ENCODE measurements at regions of chr9 and their contacts with region 1.

Region 1: GRCh38 chr9:106035806-106036205 is 341.5 kb downstream of the TMEM38B start:
- DNase-seq: no peak
- ATAC-seq: no peak
- H3K4me3 ChIP-seq: no peak overlapping the region
- H3K27ac ChIP-seq: no peak overlapping the region
- H3K4me1 ChIP-seq: peaks cover 0 to 16% (median 6%) of the 10 kb centered on the region in 9 donors
- H3K27me3 ChIP-seq: no peaks in the 10 kb centered on the region
- CTCF ChIP-seq: no peak

Region 2: GRCh38 chr9:105973951-105974351 is 61.9 kb before region 1 on chr9:
- intact Hi-C with region 1: no loop called
- DNase-seq: no peak
- ATAC-seq: peak in 4 of 8 donors; percentile 30 to 73 (median 64)
- H3K4me3 ChIP-seq: no peak overlapping the region
- H3K27ac ChIP-seq: no peak overlapping the region
- H3K4me1 ChIP-seq: peaks cover 0 to 21% (median 8%) of the 10 kb centered on the region in 9 donors
- H3K27me3 ChIP-seq: no peaks in the 10 kb centered on the region
- CTCF ChIP-seq: no peak

Region 3: DNA sequence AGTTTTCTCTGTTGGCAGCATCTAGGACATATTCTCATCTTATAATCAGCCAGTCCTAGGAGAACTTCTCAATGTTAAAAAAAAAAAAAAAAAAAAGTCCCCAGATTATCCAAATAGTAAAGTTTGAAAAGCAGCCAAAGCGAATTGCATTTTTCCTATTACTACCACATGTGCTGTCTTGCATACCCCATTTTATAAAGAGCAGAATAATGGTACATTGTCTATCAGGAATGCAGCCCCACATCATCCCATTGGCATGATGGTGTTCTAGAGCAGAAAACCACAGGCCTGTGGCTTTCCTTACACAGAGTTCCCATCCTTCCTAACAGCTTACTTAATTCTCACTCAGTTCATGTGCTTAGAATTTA is 40.1 kb after region 1 on chr9:
- intact Hi-C with region 1: no loop called
- DNase-seq: no peak
- ATAC-seq: no peak
- H3K4me3 ChIP-seq: no peak overlapping the region
- H3K27ac ChIP-seq: no peak overlapping the region
- H3K4me1 ChIP-seq: peaks cover 0 to 5% (median 0%) of the 10 kb centered on the region in 9 donors
- H3K27me3 ChIP-seq: no peaks in the 10 kb centered on the region
- CTCF ChIP-seq: no peak

Region 4: GRCh38 chr9:106092083-106092482 is 56.3 kb after region 1 on chr9:
- intact Hi-C with region 1: loop called in 1 of 10 experiments (anchors 10 kb)
- DNase-seq: no peak
- ATAC-seq: no peak
- H3K4me3 ChIP-seq: no peak overlapping the region
- H3K27ac ChIP-seq: no peak overlapping the region
- H3K4me1 ChIP-seq: no peaks in the 10 kb centered on the region
- H3K27me3 ChIP-seq: no peaks in the 10 kb centered on the region
- CTCF ChIP-seq: no peak

Measured in heart right ventricle (tissue), 16 donors.